Activated naive CD4-positive, alpha-beta T cell treated with anti-CD3 and anti-CD28 coated beads for 36 hours (primary cell): ENCODE measurements at regions of chr6 and their contacts with region 1.

Region 1: GRCh38 chr6:14734416-14735340 is 511.2 kb upstream of the JARID2 start:
- DNase-seq: peak; percentile 74
- H3K4me3 Mint-ChIP-seq: peak overlapping the region; percentile 54
- H3K27ac Mint-ChIP-seq: peak overlapping the region; percentile 96
- H3K4me1 Mint-ChIP-seq: peaks cover 97% of the 10 kb centered on the region
- H3K27me3 Mint-ChIP-seq: no peaks in the 10 kb centered on the region

Region 2: GRCh38 chr6:13668291-13668928 is 1066.3 kb before region 1 on chr6:
- CTCF ChIA-PET with region 1: no interaction called
- intact Hi-C with region 1: no loop called
- DNase-seq: no peak
- H3K4me3 Mint-ChIP-seq: peak overlapping the region; percentile 5
- H3K27ac Mint-ChIP-seq: peak overlapping the region; percentile 86
- H3K4me1 Mint-ChIP-seq: peaks cover 90% of the 10 kb centered on the region
- H3K27me3 Mint-ChIP-seq: no peaks in the 10 kb centered on the region

Region 3: DNA sequence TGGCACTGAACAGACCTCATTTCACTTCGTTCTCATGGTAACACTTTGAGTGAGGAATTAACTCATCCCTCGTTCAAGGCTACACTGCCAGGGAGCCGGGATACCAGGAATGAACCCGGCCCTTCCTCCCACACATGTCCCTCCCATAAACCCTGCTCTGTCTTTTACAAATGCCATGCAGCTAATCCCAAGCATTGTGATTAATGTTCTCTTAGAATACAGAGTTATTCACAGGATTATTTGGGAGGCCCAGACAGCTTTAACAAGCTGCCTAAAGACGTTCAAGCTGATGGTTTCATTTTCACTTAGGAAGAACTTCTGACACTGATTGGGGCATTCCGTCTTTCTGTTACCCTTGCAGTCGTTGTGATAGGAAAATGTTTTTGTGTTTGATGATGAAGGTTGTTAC is 659.6 kb before region 1 on chr6:
- CTCF ChIA-PET with region 1: no interaction called
- intact Hi-C with region 1: loop called (anchors 5 kb)
- DNase-seq: peak; percentile 29
- H3K4me3 Mint-ChIP-seq: peak overlapping the region; percentile 46
- H3K27ac Mint-ChIP-seq: peak overlapping the region; percentile 73
- H3K4me1 Mint-ChIP-seq: peaks cover 53% of the 10 kb centered on the region
- H3K27me3 Mint-ChIP-seq: no peaks in the 10 kb centered on the region

Region 4: GRCh38 chr6:14381829-14382677 is 352.6 kb before region 1 on chr6:
- CTCF ChIA-PET with region 1: no interaction called
- intact Hi-C with region 1: loop called (anchors 5 kb)
- DNase-seq: peak; percentile 54
- H3K4me3 Mint-ChIP-seq: no peak overlapping the region
- H3K27ac Mint-ChIP-seq: peak overlapping the region; percentile 41
- H3K4me1 Mint-ChIP-seq: peaks cover 36% of the 10 kb centered on the region
- H3K27me3 Mint-ChIP-seq: peaks cover 2% of the 10 kb centered on the region

Region 5: DNA sequence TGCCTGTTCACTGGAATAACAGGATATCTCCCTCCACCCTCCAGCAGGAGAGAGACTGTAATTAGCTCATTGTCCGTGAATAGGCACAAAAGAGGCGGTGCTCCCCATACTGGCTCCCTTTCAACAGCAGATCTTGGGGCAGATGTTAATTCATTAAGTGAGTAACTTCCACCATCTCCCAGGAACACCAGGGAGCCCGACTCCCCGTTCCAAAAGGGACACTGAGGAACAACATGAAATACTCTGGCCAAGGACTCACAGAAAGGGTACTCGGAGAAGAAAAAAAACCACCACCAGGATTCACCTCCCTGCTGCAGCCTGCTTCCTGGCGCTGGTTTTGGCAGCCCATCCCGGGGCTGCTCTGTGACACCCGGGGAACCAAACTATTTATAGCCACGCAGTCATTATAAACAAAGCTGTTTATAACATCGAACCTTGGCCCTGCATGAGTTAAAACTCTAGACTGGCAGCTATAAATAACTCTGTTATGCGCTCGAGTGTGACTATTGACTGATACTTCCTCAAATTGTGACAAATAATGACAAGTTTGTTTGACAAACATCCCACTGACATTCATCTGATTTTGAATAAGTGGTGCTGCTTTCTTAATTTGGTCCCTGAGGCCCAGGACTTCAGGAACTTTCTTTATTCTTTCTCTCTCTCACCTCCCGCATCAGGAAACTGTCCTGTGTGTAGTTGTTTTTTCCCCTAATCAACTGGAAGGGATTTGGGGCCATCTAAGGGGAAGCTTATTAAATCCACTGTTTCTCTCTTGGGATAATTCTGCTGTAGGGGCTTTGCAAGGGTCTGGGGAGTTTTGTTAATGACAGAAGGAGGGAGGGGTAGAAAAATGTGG is 95.5 kb before region 1 on chr6:
- CTCF ChIA-PET with region 1: no interaction called
- intact Hi-C with region 1: loop called (anchors 1 kb)
- DNase-seq: no peak
- H3K4me3 Mint-ChIP-seq: no peak overlapping the region
- H3K27ac Mint-ChIP-seq: no peak overlapping the region
- H3K4me1 Mint-ChIP-seq: peaks cover 48% of the 10 kb centered on the region
- H3K27me3 Mint-ChIP-seq: no peaks in the 10 kb centered on the region

Region 6: GRCh38 chr6:14722704-14723103 is 12.0 kb before region 1 on chr6:
- CTCF ChIA-PET with region 1: interaction called, 4 read pairs
- intact Hi-C with region 1: loop called (anchors 1 kb)
- DNase-seq: peak; percentile 44
- H3K4me3 Mint-ChIP-seq: no peak overlapping the region
- H3K27ac Mint-ChIP-seq: no peak overlapping the region
- H3K4me1 Mint-ChIP-seq: peaks cover 34% of the 10 kb centered on the region
- H3K27me3 Mint-ChIP-seq: no peaks in the 10 kb centered on the region

Region 7: GRCh38 chr6:15299430-15300131 is 564.9 kb after region 1 on chr6:
- CTCF ChIA-PET with region 1: no interaction called
- intact Hi-C with region 1: loop called (anchors 5 kb)
- DNase-seq: peak; percentile 36
- H3K4me3 Mint-ChIP-seq: no peak overlapping the region
- H3K27ac Mint-ChIP-seq: no peak overlapping the region
- H3K4me1 Mint-ChIP-seq: peaks cover 82% of the 10 kb centered on the region
- H3K27me3 Mint-ChIP-seq: no peaks in the 10 kb centered on the region

Region 8: DNA sequence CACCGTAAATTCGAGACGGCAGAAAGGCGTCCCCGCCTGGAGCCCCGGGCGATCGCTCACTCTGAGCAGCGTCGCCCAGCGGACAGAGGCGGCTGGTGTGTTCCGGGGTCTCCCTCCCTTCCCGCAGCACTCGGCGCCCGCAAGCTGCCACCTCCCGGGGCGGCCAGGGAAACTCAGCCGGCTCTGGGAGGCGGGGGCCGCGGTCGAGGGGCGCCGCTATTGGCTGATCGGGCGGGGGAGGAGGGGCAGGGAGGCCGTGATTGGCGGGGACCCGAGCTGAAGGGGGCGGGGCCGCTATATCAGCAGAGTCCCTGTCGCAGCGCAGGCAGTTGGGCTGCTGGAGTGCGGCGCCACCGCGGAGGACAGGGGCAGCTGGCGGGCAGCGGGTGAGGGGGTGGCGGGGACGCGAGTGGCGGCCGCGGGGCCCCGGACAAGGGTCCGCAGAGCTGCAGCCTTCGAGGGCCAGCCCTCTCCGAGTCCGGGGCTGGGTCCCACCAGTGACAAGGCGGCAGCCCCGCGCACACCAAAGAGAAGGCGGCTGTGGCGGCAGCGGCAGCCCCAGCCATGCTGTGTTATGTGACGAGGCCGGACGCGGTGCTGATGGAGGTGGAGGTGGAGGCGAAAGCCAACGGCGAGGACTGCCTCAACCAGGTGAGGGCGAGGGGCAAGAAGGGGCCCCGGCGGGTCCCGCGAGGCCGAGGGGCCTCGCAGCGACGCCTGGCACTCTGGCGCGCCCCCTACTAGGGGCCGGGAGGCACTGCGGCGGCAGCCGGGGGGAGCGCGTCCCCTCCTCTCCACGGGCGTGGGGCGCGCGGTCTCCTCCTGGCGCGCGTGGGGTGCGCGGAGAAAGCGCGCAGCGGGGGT is 1394.3 kb after region 1 on chr6 and contains the start of gene MYLIP:
- CTCF ChIA-PET with region 1: no interaction called
- intact Hi-C with region 1: loop called (anchors 10 kb)
- DNase-seq: peak; percentile 98
- H3K4me3 Mint-ChIP-seq: peak within 1 kb of the TSS; percentile 86
- H3K27ac Mint-ChIP-seq: peak within 1 kb of the TSS; percentile 92
- H3K4me1 Mint-ChIP-seq: peaks cover 30% of the 10 kb centered on the region
- H3K27me3 Mint-ChIP-seq: peaks cover 7% of the 10 kb centered on the region
- total RNA-seq, gene MYLIP: 7.3 to 8.1 TPM